ENCODE measurements at regions of chr1 and their contacts with region 1.

Region 1: GRCh38 chr1:111516005-111516535 is 12.6 kb upstream of the ADORA3 start:
- DNase-seq: no peak
- H3K4me3 Mint-ChIP-seq: no peak overlapping the region
- H3K27ac Mint-ChIP-seq: no peak overlapping the region
- H3K4me1 Mint-ChIP-seq: no peaks in the 10 kb centered on the region
- H3K27me3 Mint-ChIP-seq: no peaks in the 10 kb centered on the region
- CTCF ChIP-seq: no peak

Region 2: GRCh38 chr1:111563619-111564018 is 47.5 kb after region 1 on chr1:
- CTCF ChIA-PET with region 1: interaction called, 5 read pairs
- POLR2A ChIA-PET with region 1: no interaction called
- intact Hi-C with region 1: loop called (anchors 5 kb)
- DNase-seq: peak; percentile 49
- H3K4me3 Mint-ChIP-seq: no peak overlapping the region
- H3K27ac Mint-ChIP-seq: no peak overlapping the region
- H3K4me1 Mint-ChIP-seq: peaks cover 14% of the 10 kb centered on the region
- H3K27me3 Mint-ChIP-seq: no peaks in the 10 kb centered on the region
- CTCF ChIP-seq: no peak

Region 3: DNA sequence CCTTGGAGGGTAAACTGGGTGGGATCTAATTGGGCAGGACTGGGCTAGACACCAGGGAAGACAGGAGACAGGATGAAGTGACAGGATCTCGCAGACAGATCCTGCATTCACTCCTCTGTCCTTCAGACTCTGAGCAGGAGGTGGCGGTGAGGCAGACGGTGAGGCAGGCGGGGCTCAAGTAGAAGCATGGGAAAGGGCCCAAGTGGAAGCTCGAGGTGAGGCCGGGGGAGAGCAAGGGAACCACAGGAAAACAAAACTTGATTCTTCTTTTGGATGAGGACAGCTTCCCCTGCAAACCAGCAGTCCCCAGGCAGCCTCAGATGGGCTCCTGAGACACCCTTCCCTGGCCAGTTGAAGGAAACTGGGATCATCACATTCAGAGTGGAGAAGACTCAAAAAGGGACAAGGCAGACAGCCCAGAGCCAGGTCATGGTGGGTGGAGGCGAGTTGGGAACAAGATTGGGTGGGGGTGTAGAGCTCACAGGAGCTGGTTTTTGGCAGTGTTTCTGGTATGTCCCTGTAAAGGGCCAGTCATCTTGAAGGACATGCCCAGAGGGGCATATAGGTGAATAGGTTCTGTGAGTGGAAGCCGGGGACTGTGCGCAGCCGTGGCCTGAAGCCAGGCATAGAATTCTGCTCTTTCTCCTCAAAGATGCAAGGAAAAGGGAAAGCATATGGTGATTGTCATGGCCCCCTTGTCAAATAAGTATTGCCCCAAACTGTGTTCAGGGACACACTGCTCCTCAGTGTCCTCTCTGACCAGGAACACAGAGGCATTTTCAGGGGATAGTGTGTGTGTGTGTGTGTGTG is 205.1 kb after region 1 on chr1:
- CTCF ChIA-PET with region 1: no interaction called
- POLR2A ChIA-PET with region 1: no interaction called
- intact Hi-C with region 1: no loop called
- DNase-seq: peak; percentile 78
- H3K4me3 Mint-ChIP-seq: peak overlapping the region; percentile 1
- H3K27ac Mint-ChIP-seq: peak overlapping the region; percentile 17
- H3K4me1 Mint-ChIP-seq: peaks cover 32% of the 10 kb centered on the region
- H3K27me3 Mint-ChIP-seq: no peaks in the 10 kb centered on the region
- CTCF ChIP-seq: no peak